Ascending aorta (tissue), 2 donors: ENCODE measurements at regions of chr11 and their contacts with region 1.

Region 1: DNA sequence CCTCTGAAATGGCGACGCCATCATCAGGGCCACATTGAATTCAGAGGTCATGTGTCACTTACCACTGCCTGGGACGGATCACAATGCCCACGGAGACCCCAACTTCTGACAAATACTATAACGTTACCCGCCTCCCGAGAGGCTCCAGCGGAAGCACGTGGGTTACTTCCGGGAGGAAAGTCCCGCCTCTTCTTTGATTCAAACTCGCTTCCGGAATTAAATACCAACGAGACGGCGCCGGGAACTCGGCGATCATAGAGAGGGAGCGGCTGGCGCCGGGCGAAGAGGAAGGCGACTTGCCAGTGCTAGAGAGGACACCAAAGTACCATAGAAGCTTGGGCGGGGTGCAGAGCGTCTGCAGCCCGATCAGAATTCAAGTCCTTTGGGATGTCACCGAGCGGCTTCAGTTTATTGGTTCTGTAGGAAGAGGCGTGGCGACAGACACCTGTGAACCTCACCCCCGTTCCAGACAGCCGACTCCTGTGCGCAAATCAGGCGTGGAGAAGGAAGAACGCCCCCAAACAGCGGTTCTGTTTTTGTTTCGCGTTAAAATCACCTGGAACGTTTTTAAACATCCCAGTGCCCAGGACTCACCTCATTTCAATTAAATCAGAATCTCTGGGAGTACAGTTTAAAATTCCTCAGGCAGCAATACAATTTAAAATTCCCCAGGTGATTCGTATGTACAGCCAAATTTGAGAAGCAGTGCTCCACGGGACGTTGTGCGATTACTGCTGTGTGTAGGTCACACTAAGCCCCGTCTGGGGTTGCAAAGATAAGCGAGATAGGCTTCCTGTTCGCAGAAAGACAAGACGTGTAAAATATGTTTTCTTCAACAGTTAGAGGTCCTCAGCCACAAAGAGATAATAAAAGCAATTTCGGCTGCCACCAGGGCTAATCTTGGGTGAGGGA is at the start of gene TIMM10:
- DNase-seq: peak; percentile 82 to 97
- H3K4me3 ChIP-seq: peak within 1 kb of the TSS; percentile 67
- H3K27ac ChIP-seq: peak within 1 kb of the TSS; percentile 56 to 70
- H3K4me1 ChIP-seq: peaks cover 5 to 12% of the 10 kb centered on the region in 2 donors
- H3K27me3 ChIP-seq: no peaks in the 10 kb centered on the region
- CTCF ChIP-seq: no peak
- total RNA-seq, gene TIMM10: not detected

Region 2: GRCh38 chr11:56183459-56183858 is 1347.4 kb before region 1 on chr11:
- intact Hi-C with region 1: no loop called
- DNase-seq: no peak
- H3K4me3 ChIP-seq: no peak overlapping the region
- H3K27ac ChIP-seq: no peak overlapping the region
- H3K4me1 ChIP-seq: no peaks in the 10 kb centered on the region
- H3K27me3 ChIP-seq: no peaks in the 10 kb centered on the region
- CTCF ChIP-seq: no peak

Region 3: DNA sequence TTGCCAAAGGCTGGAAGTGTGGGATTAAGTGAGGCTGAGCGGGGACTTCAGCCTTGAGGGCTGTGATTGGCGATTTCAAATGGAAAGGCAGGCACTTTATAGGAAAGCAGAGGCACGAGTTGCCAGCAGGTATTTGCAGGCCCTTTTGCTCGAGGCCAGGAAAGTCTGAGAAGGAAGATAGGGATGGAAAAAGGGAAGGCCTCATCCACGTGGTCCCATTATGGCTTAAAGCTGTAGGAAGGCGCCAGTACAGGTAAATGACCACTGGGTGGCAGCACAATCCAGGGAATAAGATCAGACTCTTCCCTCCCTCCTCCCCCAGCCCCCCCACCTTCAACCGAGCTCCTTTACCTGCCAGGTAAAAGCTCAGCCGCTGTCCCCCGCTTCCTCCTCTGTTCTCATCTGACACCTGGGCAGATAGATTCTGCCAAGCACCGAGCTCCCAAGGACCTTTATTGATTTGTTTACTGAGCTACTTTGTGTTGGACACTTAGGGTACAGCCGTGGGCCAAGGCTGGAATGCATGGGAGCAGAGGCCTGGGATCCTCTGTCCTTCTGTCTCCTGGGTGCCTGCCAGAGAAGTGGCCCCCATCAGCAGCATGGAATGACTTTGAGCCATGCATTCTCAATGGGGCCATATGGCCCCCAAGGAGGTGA is 185.2 kb before region 1 on chr11:
- intact Hi-C with region 1: loop called (anchors 5 kb)
- DNase-seq: peak in 1 of 2 donors; percentile 82
- H3K4me3 ChIP-seq: no peak overlapping the region
- H3K27ac ChIP-seq: no peak overlapping the region
- H3K4me1 ChIP-seq: no peaks in the 10 kb centered on the region
- H3K27me3 ChIP-seq: no peaks in the 10 kb centered on the region
- CTCF ChIP-seq: peak; percentile 49 to 79 (median 64)

Region 4: DNA sequence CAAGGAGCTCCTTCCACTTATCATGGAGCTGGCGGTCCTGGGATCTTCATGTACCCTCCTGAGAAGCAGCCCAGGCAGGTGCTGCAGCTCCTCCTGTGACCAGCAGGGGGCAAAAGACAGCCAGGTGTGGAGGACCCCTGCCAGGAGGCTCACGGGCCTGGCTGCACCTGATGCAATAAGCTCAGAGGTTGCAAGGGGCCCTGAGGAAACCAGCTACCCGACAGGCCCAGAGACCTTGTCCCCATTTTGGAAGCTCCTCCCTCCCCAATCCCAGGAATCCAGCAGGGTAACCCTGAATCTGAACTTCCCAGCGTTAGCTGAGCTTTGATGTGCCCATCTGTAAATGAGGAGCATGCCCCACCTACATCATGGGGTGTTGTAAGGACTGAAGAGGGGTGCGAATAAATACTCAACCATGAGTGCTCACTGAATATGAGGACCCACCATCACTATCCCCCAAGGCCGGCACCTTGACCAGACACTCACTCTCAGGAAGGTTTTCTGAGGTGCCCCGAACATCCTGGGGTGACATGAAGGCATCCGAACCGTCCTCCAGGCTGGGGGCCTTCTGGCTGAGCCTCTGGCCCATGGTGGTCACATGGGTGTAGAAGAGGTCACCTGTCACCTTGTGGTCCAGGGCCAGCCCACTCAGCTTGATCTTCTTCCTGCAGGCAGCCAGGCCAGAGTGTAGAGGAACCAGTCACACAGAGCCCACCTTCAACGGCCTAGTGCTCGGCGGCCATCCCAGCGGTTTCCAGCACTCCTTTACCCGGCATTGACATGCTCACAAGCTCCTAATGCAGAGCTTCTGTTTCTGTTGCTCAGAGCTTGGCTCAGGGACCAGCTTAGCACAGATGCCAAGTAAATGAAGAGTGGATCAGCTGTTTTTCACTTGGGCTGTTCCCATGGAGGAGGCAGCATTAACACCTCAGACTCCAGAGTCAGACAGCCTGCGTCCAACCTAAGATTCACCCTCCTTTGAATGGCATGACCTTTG is 37.0 kb before region 1 on chr11:
- intact Hi-C with region 1: loop called (anchors 1 kb)
- DNase-seq: peak in 1 of 2 donors; percentile 76
- H3K4me3 ChIP-seq: no peak overlapping the region
- H3K27ac ChIP-seq: no peak overlapping the region
- H3K4me1 ChIP-seq: peaks cover 0 to 1% of the 10 kb centered on the region in 2 donors
- H3K27me3 ChIP-seq: no peaks in the 10 kb centered on the region
- CTCF ChIP-seq: peak; percentile 71 to 94 (median 91)

Region 5: DNA sequence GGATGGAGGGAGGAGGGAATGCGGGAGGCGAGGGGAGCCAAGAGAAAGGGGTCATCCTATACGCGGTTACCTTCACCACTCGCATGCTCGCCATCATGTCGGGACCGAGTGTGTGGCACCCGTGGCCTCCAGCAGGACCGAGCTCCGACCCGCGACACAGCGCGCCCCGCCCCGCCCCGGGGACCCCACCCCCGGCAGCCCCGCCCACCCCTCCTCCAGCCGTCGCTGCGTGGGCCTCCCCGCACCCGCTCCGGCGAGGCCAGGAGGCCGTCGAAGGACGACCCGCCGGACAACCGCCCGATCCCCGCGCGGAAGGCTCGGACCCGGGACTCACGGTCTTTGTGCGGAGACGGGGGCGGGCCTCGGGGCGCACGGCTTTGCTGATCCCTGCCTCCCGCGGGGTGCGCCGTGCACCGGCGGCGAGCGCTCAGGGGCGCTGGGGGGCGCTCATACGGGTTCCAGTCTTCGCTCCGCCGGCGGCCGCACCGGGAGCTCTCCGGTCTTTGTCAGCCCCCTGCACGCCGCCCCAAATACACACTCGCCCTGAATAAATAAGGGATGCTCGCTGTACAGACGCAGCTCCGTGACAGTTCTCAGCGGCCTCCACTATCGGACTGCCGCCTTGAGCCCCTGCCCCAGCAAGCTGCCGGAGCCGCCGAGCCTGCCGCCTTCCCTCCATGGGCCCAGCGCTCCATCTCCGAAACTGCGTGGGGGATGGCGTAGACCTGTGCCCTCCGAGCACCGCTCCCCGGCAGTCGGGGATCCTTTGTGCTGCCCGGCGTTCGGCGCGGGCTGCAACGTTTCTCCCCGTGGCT is 36.9 kb after region 1 on chr11 and contains the start of gene UBE2L6:
- intact Hi-C with region 1: loop called (anchors 5 kb)
- DNase-seq: peak; percentile 16 to 72
- H3K4me3 ChIP-seq: peak within 1 kb of the TSS; percentile 84 to 93
- H3K27ac ChIP-seq: peak within 1 kb of the TSS; percentile 78 to 82
- H3K4me1 ChIP-seq: peaks cover 6 to 20% of the 10 kb centered on the region in 2 donors
- H3K27me3 ChIP-seq: no peaks in the 10 kb centered on the region
- CTCF ChIP-seq: peak in 1 of 3 experiments; percentile 90
- total RNA-seq, gene UBE2L6: 44.9 TPM

Region 6: DNA sequence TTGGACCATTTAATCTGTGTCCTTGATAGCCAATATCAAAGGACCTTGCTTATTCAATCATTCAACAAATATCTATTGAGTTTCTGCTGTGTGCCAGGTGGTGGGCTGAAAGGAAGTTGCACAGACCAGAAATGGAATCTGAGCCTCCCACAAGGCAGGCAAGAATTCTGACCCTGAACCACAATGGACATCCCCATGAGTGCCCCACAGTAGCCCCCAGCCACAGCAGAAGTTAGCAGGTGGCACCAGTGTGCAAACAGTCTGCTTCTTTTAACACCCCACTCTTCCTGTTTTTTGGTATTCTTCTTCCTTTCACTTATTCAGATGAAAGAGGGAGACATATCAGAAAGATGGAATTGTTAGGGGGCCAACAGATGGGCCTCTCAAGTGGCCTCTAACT is 54.4 kb after region 1 on chr11:
- intact Hi-C with region 1: no loop called
- DNase-seq: no peak
- H3K4me3 ChIP-seq: no peak overlapping the region
- H3K27ac ChIP-seq: no peak overlapping the region
- H3K4me1 ChIP-seq: no peaks in the 10 kb centered on the region
- H3K27me3 ChIP-seq: no peaks in the 10 kb centered on the region
- CTCF ChIP-seq: no peak